Sigmoid colon (tissue), 7 donors: ENCODE measurements at regions of chr7 and their contacts with region 1.

Region 1: DNA sequence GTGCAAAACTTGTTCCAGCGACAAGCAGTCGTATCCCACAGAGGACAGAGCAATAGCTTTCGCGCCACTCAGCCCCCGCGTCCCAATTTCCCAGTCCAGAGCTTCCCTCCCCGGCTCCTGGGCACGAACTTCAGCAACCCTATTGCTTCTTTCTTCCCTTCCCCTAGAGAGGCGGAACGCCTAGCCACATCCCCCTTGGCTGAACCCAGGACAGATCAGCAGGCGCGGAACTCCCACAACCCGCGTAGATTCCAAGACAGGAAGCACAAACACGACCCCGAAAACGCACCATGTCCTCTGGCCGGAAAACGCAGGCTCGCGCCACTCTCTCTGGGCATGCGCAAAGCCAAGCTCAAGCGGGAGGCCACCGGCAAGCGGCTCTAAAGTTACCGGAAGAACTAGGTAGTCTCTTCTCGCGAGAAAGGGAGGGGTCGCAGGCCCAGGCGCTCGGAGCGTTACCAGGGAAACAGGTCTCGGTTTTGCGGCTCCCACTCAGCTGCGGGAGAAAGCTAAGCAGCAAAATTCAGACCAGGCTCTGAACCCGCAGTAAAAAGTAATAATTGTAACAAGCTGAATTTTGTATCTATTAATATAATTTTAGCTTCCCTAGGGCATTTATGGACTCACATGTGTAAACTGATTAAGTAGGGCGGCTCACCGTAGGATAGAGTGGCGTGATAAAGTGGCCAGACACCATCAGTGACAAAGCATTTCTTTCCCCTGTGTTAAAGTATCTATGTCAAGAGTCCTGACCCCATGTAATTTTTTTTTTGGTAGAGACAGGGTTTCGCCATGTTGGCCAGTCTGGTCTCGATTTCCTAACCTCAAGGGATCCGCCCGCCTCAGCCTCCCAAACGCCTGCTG is at the start of gene TMEM209:
- DNase-seq: peak; percentile 97
- H3K4me3 ChIP-seq: peak within 1 kb of the TSS; percentile 71 to 87 (median 80)
- H3K27ac ChIP-seq: peak within 1 kb of the TSS; percentile 88 to 93 (median 92)
- H3K4me1 ChIP-seq: peaks cover 0 to 12% (median 6%) of the 10 kb centered on the region in 4 donors
- H3K27me3 ChIP-seq: no peaks in the 10 kb centered on the region
- CTCF ChIP-seq: no peak
- EP300 ChIP-seq: peak in 1 of 4 donors; percentile 42
- POLR2A ChIP-seq: peak; percentile 55 to 60
- total RNA-seq, gene TMEM209: 6.5 to 9.6 (median 8.9) TPM

Region 2: DNA sequence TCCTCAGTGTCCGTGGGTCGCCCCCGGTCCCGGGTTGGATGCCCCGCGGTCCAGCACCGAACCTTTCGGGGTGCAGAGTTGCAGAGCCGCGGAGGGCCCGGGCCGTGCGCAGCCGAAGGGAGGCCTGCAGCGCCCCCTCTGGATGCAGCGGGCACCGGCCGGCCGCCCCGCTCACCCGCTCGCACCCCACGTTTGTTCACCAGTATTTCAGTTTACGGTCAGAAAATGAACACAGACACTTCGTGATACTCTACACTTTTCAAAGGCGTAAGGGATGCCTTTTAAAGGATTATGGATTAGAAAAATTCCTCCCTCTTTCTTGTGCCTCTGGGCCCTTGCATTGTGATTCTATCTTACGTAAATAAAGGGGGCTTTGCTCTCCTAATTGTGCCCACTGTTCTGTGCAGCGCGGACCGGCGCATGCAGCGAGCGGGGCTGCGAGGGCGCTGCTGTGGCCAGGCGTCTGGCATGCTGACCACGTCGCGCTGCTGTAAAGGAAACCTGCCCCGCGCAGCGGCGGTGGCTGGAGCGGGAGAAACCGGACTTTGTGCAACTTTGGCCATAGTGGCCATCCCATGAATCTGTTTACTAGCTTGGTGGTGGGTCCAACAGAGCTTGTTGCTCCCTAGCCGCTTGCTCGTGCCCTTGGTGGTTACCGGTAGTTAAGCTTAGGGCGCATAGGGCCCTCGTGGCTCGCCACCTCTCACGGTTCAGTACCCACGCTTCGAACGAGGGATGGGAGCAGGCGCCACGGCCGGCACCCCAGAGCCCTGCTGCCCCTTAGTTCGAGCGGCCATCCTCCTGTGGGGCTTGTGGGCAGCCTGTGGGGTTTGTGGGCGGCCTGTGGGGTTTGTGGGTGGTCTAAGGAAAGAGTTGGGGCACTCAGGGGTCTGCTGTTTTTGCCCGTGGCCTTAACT is 285.8 kb after region 1 on chr7:
- intact Hi-C with region 1: loop called (anchors 5 kb)
- DNase-seq: peak; percentile 78
- H3K4me3 ChIP-seq: peak overlapping the region; percentile 14 to 53 (median 44)
- H3K27ac ChIP-seq: peak overlapping the region in 3 of 4 donors; percentile 0 to 64 (median 60)
- H3K4me1 ChIP-seq: peaks cover 0 to 33% (median 31%) of the 10 kb centered on the region in 4 donors
- H3K27me3 ChIP-seq: peaks cover 10 to 52% (median 14%) of the 10 kb centered on the region in 3 donors
- CTCF ChIP-seq: peak; percentile 17 to 56 (median 46)
- EP300 ChIP-seq: no peak
- POLR2A ChIP-seq: no peak